Sigmoid colon (tissue), 7 donors: ENCODE measurements at regions of chr6 and their contacts with region 1.

Region 1: GRCh38 chr6:151240036-151240685 is 394 bp downstream of the AKAP12 start:
- DNase-seq: peak; percentile 97
- H3K4me3 ChIP-seq: peak overlapping the region; percentile 71 to 98 (median 93)
- H3K27ac ChIP-seq: peak overlapping the region; percentile 96 to 98 (median 97)
- H3K4me1 ChIP-seq: peaks cover 0 to 38% (median 17%) of the 10 kb centered on the region in 4 donors
- H3K27me3 ChIP-seq: no peaks in the 10 kb centered on the region
- CTCF ChIP-seq: no peak
- EP300 ChIP-seq: peak in 2 of 4 donors; percentile 16 to 31
- POLR2A ChIP-seq: peak; percentile 59 to 85

Region 2: DNA sequence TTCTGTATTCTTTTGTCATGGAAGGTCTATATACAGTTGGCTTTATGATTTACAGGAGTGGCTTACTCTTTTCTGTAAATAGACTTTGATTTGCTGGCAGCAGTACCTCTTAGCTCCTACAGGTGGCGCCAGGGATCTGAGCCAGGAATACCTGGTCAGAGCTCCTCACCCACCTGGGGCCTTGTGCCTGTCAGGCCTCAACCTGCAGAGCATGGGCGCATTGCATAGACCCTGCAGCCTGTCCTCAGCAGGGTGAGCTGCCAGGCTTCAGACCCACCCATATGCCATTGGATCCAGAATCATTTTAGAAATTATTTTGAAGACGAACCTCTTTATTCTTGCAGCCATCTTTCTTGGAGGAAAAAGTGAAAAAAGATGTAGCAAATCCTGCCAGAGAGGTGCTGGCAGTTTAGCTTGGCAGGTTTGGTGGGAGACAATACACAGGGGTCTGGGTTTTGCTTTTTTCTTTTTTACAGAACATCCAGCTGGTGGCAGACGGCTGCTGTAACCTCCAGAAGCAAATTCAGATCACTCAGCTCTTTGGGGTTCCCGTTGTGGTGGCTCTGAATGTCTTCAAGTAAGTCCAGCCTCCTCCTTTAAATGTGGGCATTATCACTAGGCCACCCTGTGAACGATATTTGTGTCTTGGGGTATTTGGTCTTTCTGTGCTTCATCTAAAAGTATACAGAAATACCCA is 225.6 kb before region 1 on chr6:
- intact Hi-C with region 1: loop called (anchors 2 kb)
- DNase-seq: peak; percentile 89
- H3K4me3 ChIP-seq: peak overlapping the region in 1 of 4 donors; percentile 11
- H3K27ac ChIP-seq: peak overlapping the region in 3 of 4 donors; percentile 11 to 62 (median 50)
- H3K4me1 ChIP-seq: peaks cover 0 to 18% (median 2%) of the 10 kb centered on the region in 4 donors
- H3K27me3 ChIP-seq: no peaks in the 10 kb centered on the region
- CTCF ChIP-seq: peak; percentile 89 to 100 (median 97)
- EP300 ChIP-seq: no peak
- POLR2A ChIP-seq: no peak

Region 3: GRCh38 chr6:151044465-151045441 is 195.4 kb before region 1 on chr6:
- intact Hi-C with region 1: loop called (anchors 2 kb)
- DNase-seq: peak; percentile 91
- H3K4me3 ChIP-seq: peak overlapping the region; percentile 10 to 32 (median 28)
- H3K27ac ChIP-seq: peak overlapping the region; percentile 62 to 90 (median 88)
- H3K4me1 ChIP-seq: peaks cover 0 to 41% (median 33%) of the 10 kb centered on the region in 4 donors
- H3K27me3 ChIP-seq: no peaks in the 10 kb centered on the region
- CTCF ChIP-seq: no peak
- EP300 ChIP-seq: peak in 2 of 4 donors; percentile 33 to 68
- POLR2A ChIP-seq: no peak

Region 4: DNA sequence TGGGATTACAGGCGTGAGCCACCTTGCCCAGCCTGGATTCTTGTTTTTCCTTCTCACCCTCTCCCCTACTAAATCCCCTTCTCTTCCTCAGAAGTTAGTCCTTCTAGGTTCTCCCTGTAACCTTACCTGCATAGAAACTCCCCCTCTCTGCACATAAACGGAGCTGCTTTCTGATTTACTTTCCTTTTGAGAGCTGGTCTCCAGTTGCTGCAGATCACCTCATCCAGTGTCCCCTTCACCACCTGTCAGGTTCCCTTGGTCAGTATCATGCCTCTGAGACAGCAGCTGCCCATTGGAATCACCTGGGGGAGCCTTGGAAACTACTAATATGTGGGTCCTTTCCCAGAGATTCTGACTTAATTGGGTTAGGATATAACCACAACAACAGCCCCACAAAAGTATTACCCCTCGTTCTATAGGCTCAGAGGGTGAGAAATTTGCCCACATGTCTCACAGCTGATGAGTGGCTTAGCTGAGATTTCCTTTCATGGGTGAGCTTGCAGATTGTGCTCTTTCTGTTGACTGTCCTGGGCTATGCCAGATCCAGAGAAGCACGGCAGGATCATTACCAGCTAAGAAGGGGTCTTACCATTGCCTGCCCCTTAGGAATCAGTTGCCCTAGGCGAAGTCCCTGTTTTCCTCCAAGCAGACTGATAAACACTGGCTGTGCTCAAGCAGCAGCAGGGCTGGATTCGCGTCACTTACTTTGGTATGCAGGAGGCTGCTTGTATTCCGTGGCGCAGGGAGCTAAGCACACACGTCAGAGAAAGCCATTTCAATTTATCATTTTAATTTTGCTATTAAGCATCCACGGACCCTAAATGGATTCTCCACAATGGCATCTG is 50.9 kb after region 1 on chr6:
- intact Hi-C with region 1: loop called (anchors 5 kb)
- DNase-seq: peak; percentile 97
- H3K4me3 ChIP-seq: no peak overlapping the region
- H3K27ac ChIP-seq: peak overlapping the region; percentile 83 to 96 (median 88)
- H3K4me1 ChIP-seq: peaks cover 0 to 84% (median 73%) of the 10 kb centered on the region in 4 donors
- H3K27me3 ChIP-seq: no peaks in the 10 kb centered on the region
- CTCF ChIP-seq: no peak
- EP300 ChIP-seq: peak; percentile 98 to 100 (median 98)
- POLR2A ChIP-seq: peak in 1 of 2 donors; percentile 30

Region 5: GRCh38 chr6:151313066-151313491 is 72.9 kb after region 1 on chr6:
- intact Hi-C with region 1: no loop called
- DNase-seq: no peak
- H3K4me3 ChIP-seq: no peak overlapping the region
- H3K27ac ChIP-seq: peak overlapping the region in 3 of 4 donors; percentile 13 to 93 (median 80)
- H3K4me1 ChIP-seq: peaks cover 0 to 63% (median 46%) of the 10 kb centered on the region in 4 donors
- H3K27me3 ChIP-seq: no peaks in the 10 kb centered on the region
- CTCF ChIP-seq: no peak
- EP300 ChIP-seq: no peak
- POLR2A ChIP-seq: no peak

Region 6: DNA sequence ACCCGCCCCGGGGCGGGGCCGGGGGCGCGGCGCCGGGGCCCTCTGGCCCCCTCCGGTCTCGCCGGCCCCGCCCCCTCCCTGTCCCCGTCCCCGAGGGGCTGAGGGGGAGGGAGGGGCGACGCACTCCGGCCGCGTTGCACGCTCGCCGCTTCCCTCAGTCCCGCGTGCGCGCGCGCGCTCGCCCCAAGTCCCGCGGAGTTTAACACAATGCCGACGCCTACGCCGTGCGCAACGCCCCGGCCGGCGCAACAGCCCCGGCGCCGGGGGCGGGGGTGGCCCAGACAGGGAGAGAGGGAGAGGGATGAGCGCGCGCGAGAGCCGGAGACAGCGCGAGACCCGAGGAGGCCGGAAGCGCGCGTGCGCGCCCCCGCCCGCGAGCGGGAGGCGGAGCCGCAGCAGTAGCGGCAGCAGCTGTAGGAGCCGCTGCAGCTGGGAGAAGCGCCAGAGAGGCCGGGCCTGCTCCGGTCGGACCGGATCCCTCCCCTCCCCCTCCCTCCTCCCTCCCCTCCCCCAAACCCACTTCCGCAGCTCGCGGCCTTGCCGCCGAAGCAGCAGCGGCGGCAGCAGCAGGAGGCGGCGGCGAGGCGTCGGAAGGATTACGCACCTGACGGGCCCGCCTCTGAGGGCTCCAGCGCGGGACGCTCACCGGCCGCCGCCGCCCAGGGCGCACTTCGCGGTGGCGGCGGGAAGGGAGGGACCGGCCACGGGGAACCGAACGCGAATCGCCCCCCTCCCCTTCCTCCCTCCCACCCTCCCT is 150.3 kb after region 1 on chr6:
- intact Hi-C with region 1: loop called (anchors 5 kb)
- DNase-seq: peak; percentile 98
- H3K4me3 ChIP-seq: peak overlapping the region; percentile 89 to 99 (median 95)
- H3K27ac ChIP-seq: peak overlapping the region; percentile 95 to 100 (median 100)
- H3K4me1 ChIP-seq: peaks cover 0 to 46% (median 33%) of the 10 kb centered on the region in 4 donors
- H3K27me3 ChIP-seq: no peaks in the 10 kb centered on the region
- CTCF ChIP-seq: no peak
- EP300 ChIP-seq: no peak
- POLR2A ChIP-seq: peak; percentile 46 to 60